ENCODE measurements at regions of chr11 and their contacts with region 1.

Region 1: GRCh38 chr11:83156150-83156995 is 558 bp upstream of the PCF11 start:
- DNase-seq: peak; percentile 100
- ATAC-seq: peak; percentile 92
- H3K4me3 ChIP-seq: peak overlapping the region; percentile 86 to 95
- H3K27ac ChIP-seq: peak overlapping the region; percentile 92
- H3K4me1 ChIP-seq: peaks cover 12% of the 10 kb centered on the region
- H3K27me3 ChIP-seq: no peaks in the 10 kb centered on the region
- CTCF ChIP-seq: no peak

Region 2: GRCh38 chr11:82900277-82901164 is 255.9 kb before region 1 on chr11 and contains the start of gene PRCP:
- CTCF ChIA-PET with region 1: no interaction called
- POLR2A ChIA-PET with region 1: interaction called, 3 read pairs
- in situ Hi-C with region 1: no loop called
- intact Hi-C with region 1: loop called (anchors 10 kb)
- DNase-seq: peak; percentile 79
- ATAC-seq: peak; percentile 94
- H3K4me3 ChIP-seq: peak within 1 kb of the TSS; percentile 75 to 91
- H3K27ac ChIP-seq: peak within 1 kb of the TSS; percentile 93
- H3K4me1 ChIP-seq: peaks cover 20% of the 10 kb centered on the region
- H3K27me3 ChIP-seq: no peaks in the 10 kb centered on the region
- CTCF ChIP-seq: no peak
- total RNA-seq, gene PRCP: 57.0 TPM

Region 3: DNA sequence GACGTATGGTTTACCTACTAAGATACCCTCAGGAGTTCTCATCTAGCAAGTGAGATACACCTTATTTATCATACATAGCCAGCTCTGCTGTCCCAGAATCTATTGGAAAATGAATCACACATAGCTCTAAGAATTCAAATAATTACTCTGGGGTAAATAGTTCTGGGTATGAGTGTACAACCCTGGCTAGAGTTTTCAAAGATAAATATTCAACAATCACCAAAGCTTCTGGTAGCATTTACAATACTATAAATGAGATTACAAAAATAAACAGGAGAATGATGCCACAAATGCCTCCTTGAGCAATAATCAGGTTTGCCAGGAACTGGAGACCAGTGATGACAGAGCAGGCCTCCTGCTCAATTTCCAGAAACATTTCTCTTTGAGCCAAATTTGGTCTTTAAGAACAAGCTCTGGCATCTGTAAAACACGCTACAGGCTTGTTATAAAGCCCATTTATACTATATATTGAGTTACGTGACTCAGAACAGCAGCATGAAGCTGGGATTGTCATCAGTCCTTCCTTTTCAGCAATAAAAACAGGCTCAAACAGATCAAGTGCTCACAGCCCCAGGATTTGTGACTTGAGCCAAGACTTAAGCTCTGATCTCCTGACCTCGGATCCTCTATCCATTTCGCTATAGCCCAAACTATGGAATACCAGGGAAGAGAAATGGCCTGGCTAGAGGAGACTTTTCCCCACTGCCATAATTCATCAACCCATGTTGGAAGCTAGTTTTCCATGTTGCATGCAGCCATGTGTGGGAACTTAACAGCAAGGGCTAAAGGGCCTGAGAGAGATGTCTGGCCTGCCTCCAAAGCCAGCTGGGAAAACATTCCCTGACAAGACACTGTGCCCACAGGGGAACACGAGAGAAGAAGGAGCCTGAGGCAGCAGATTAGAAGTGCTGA is 104.4 kb before region 1 on chr11:
- CTCF ChIA-PET with region 1: no interaction called
- POLR2A ChIA-PET with region 1: interaction called, 11 read pairs
- in situ Hi-C with region 1: no loop called
- intact Hi-C with region 1: no loop called
- DNase-seq: peak; percentile 84
- ATAC-seq: peak; percentile 88
- H3K4me3 ChIP-seq: peak overlapping the region in 1 of 2 experiments; percentile 10; a peak in 1 of 4 replicates
- H3K27ac ChIP-seq: peak overlapping the region; percentile 75
- H3K4me1 ChIP-seq: peaks cover 44% of the 10 kb centered on the region
- H3K27me3 ChIP-seq: no peaks in the 10 kb centered on the region
- CTCF ChIP-seq: no peak

Region 4: DNA sequence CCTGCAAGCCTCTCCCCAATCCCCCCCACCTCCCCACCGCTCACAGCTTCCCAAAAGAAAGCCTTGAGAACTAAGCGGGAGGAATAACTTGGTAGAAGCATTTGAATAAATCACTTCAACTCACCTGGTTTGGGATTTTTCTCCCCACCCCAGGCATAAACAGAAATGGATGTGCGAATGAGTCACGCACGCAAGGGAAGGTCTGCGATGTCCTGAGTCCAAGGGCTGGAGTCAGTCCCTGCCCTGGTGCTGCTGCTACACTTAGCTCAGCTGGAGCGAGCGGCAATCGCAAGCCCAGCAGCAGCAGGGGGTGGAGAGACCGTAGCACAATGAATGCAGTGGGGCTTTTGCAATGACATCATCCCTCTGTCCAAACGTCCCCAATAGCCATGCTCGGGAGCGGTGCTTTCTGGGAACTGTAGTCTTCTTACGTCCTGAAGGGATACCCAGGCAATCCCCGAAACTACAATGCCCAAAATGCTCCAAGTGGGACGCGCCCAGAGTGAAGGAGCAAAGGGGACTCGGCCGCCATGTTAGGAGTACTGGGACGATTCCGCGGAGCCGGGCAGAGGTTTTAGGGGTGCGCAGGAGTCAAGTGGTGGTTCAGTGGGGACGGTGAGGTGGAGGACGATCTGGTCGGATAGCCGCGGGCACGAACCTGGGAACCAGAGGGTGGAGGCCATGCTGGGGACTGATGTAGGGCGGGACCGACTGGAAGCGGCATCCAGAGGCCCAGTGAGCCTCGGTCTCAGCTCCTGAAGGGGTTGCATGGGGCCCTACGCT is 84.6 kb before region 1 on chr11 and contains the start of gene RAB30:
- CTCF ChIA-PET with region 1: no interaction called
- POLR2A ChIA-PET with region 1: interaction called, 3 read pairs
- in situ Hi-C with region 1: no loop called
- intact Hi-C with region 1: loop called (anchors 5 kb)
- DNase-seq: peak; percentile 99
- ATAC-seq: peak; percentile 99
- H3K4me3 ChIP-seq: peak within 1 kb of the TSS; percentile 85 to 99
- H3K27ac ChIP-seq: peak within 1 kb of the TSS; percentile 98
- H3K4me1 ChIP-seq: peaks cover 25% of the 10 kb centered on the region
- H3K27me3 ChIP-seq: no peaks in the 10 kb centered on the region
- CTCF ChIP-seq: no peak
- total RNA-seq, gene RAB30: 19.0 TPM

Region 5: GRCh38 chr11:83087035-83087434 is 69.3 kb before region 1 on chr11:
- CTCF ChIA-PET with region 1: no interaction called
- POLR2A ChIA-PET with region 1: interaction called, 6 read pairs
- in situ Hi-C with region 1: no loop called
- intact Hi-C with region 1: loop called (anchors 5 kb)
- DNase-seq: no peak
- ATAC-seq: peak; percentile 57
- H3K4me3 ChIP-seq: no peak overlapping the region
- H3K27ac ChIP-seq: no peak overlapping the region
- H3K4me1 ChIP-seq: peaks cover 5% of the 10 kb centered on the region; the same call in 1 of the 2 replicates
- H3K27me3 ChIP-seq: no peaks in the 10 kb centered on the region
- CTCF ChIP-seq: peak; percentile 54; the same call in 1 of the 2 replicates

Region 6: GRCh38 chr11:83115551-83115950 is 40.8 kb before region 1 on chr11:
- CTCF ChIA-PET with region 1: no interaction called
- POLR2A ChIA-PET with region 1: interaction called, 10 read pairs
- in situ Hi-C with region 1: no loop called
- intact Hi-C with region 1: no loop called
- DNase-seq: no peak
- ATAC-seq: peak; percentile 33
- H3K4me3 ChIP-seq: no peak overlapping the region
- H3K27ac ChIP-seq: no peak overlapping the region
- H3K4me1 ChIP-seq: no peaks in the 10 kb centered on the region
- H3K27me3 ChIP-seq: no peaks in the 10 kb centered on the region
- CTCF ChIP-seq: no peak

Region 7: DNA sequence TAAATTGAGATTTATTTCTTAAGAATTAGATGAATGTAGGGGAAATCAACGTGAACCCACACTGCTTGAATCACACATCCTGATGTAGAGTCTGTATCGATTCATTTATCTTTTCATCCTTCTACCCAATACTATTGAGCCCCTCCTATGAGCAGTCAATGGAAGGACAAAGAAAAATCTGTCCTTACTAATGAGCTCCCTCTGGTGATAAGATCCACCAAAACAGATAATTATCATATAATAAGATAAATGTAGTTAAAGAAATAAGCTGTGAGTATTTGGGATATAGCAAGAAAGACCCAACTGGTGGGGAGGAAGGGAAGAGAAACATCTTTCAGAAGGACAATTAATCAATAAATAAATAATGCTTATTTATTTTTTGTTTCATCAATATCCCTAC is 514.9 kb after region 1 on chr11:
- CTCF ChIA-PET with region 1: no interaction called
- POLR2A ChIA-PET with region 1: no interaction called
- in situ Hi-C with region 1: no loop called
- intact Hi-C with region 1: no loop called
- DNase-seq: no peak
- ATAC-seq: no peak
- H3K4me3 ChIP-seq: no peak overlapping the region
- H3K27ac ChIP-seq: no peak overlapping the region
- H3K4me1 ChIP-seq: no peaks in the 10 kb centered on the region
- H3K27me3 ChIP-seq: peaks cover 3% of the 10 kb centered on the region; the same call in 1 of the 2 replicates
- CTCF ChIP-seq: peak; percentile 13; the same call in 1 of the 2 replicates